Activated T-helper 1 cell treated with anti-CD3 and anti-CD28 coated beads, Interleukin-12 subunit alpha, Interleukin-12 subunit beta, Interleukin-2, Interleukin-4 antibody, amounts not matched to agents 30 ng/mL and 10 ng/mL and 1 ng/mL, durations not matched to agents 14 hours and 24 hours and 36 hours (primary cell): ENCODE measurements at regions of chr3 and their contacts with region 1.

Region 1: GRCh38 chr3:121545574-121546455 is at the start of gene POLQ:
- DNase-seq: peak; percentile 83
- H3K4me3 Mint-ChIP-seq: peak within 1 kb of the TSS; percentile 89
- H3K27ac Mint-ChIP-seq: peak within 1 kb of the TSS; percentile 88
- H3K4me1 Mint-ChIP-seq: peaks cover 32% of the 10 kb centered on the region
- H3K27me3 Mint-ChIP-seq: peaks cover 2% of the 10 kb centered on the region
- total RNA-seq, gene POLQ: 29.0 and 30.1 TPM in 2 replicates

Region 2: GRCh38 chr3:121660356-121661171 is 114.7 kb after region 1 on chr3 and contains the start of gene HCLS1:
- intact Hi-C with region 1: loop called (anchors 1 kb)
- DNase-seq: peak; percentile 73
- H3K4me3 Mint-ChIP-seq: peak within 1 kb of the TSS; percentile 95
- H3K27ac Mint-ChIP-seq: peak within 1 kb of the TSS; percentile 99
- H3K4me1 Mint-ChIP-seq: peaks cover 57% of the 10 kb centered on the region
- H3K27me3 Mint-ChIP-seq: no peaks in the 10 kb centered on the region
- total RNA-seq, gene HCLS1: 234 and 235 TPM in 2 replicates

Region 3: DNA sequence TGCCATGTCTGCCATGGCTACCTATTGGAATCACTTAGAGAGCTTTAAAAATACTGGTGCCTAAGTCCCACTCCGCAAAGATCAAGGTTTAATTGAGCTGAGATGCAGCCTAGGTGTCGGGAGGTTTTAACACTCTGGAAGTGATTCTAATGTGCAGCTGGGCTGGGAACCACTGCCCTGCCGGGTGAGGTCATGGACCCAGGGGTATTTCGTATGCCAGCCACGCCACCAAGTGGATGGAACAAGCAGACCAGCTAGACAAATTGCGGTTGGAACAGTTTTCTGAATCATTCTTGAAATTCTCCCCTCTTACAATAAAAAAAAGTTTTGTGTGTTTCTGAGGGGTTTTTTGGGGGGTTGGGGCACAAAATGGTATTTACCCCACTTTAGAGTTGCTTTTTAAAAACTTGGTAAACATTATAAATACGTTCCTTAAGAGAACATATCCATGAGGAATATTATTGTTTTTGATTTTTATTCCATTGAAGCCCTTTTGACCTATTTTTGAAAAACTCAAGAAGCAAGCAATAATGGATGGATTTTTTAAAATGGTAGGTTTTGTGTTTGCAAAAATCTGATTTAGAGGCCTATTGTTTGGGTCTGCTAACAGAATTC is 713.0 kb after region 1 on chr3:
- intact Hi-C with region 1: loop called (anchors 2 kb)
- DNase-seq: peak; percentile 47
- H3K4me3 Mint-ChIP-seq: no peak overlapping the region
- H3K27ac Mint-ChIP-seq: peak overlapping the region; percentile 35
- H3K4me1 Mint-ChIP-seq: peaks cover 22% of the 10 kb centered on the region
- H3K27me3 Mint-ChIP-seq: peaks cover 17% of the 10 kb centered on the region

Region 4: GRCh38 chr3:122383771-122384697 is 838.2 kb after region 1 on chr3 and contains the start of gene FAM162A:
- intact Hi-C with region 1: loop called (anchors 1 kb)
- DNase-seq: peak; percentile 93
- H3K4me3 Mint-ChIP-seq: peak within 1 kb of the TSS; percentile 96
- H3K27ac Mint-ChIP-seq: peak within 1 kb of the TSS; percentile 90
- H3K4me1 Mint-ChIP-seq: peaks cover 81% of the 10 kb centered on the region
- H3K27me3 Mint-ChIP-seq: no peaks in the 10 kb centered on the region
- total RNA-seq, gene FAM162A: 63.7 and 70.0 TPM in 2 replicates

Region 5: DNA sequence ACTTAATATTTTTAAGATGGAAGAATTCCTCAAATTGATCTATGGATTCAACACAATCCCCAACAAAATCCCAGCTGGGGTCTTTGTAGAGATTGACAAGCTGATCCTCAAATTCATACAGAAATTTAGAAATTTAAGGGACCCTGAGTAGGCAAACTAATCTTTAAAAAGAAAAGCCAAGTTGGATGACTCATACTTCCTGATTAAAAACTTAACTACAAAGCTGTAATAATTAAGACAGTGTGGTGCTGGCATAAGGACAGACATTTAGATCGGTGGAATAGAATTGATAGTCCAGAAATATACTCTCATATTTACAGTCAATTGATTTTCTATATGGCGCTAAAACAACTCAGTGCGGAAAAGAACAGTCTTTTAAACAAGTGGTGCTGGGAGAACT is 849.8 kb after region 1 on chr3:
- intact Hi-C with region 1: no loop called
- DNase-seq: no peak
- H3K4me3 Mint-ChIP-seq: no peak overlapping the region
- H3K27ac Mint-ChIP-seq: no peak overlapping the region
- H3K4me1 Mint-ChIP-seq: peaks cover 37% of the 10 kb centered on the region
- H3K27me3 Mint-ChIP-seq: no peaks in the 10 kb centered on the region

Region 6: GRCh38 chr3:122564155-122564912 is 1018.5 kb after region 1 on chr3 and contains the starts of genes DTX3L and PARP9:
- intact Hi-C with region 1: loop called (anchors 1 kb)
- DNase-seq: peak; percentile 87
- H3K4me3 Mint-ChIP-seq: peak within 1 kb of the TSS; percentile 99
- H3K27ac Mint-ChIP-seq: peak within 1 kb of the TSS; percentile 98
- H3K4me1 Mint-ChIP-seq: peaks cover 79% of the 10 kb centered on the region
- H3K27me3 Mint-ChIP-seq: no peaks in the 10 kb centered on the region
- total RNA-seq, gene DTX3L: 40.8 and 44.5 TPM in 2 replicates
- total RNA-seq, gene PARP9: 45.0 and 47.3 TPM in 2 replicates

Region 7: DNA sequence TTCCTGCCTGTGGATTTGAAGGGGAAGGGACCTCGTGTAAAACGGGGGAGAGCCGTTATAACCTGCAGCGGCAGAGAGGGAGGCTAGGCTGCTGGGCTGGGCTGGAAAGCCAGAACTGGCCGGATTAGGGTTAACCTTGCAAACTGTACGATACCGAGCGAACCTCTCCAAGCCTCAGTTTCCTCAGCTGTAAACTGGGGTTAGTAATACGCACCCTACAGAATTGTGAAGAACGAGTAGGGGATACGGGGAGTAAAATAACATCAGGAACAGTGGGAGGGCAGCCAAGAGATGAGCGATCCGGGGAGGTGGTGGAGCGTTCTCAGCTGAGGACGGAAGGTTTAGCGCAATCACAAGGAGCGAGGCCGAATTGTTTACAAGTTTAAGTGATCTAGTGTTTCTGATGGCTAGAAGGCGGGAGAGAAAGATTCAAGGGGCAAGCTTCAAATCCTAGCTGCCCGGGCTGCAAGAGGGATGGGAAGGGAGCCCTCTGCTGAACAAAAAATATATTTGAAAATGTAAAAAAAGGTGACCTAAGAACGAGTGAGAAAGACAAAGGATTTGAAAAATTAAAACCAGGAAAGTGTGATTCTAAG is 1482.5 kb after region 1 on chr3:
- intact Hi-C with region 1: loop called (anchors 1 kb)
- DNase-seq: no peak
- H3K4me3 Mint-ChIP-seq: peak overlapping the region; percentile 74
- H3K27ac Mint-ChIP-seq: no peak overlapping the region
- H3K4me1 Mint-ChIP-seq: peaks cover 14% of the 10 kb centered on the region
- H3K27me3 Mint-ChIP-seq: peaks cover 62% of the 10 kb centered on the region